GM12878 (cell line): ENCODE measurements at regions of chr16 and their contacts with region 1.

Region 1: DNA sequence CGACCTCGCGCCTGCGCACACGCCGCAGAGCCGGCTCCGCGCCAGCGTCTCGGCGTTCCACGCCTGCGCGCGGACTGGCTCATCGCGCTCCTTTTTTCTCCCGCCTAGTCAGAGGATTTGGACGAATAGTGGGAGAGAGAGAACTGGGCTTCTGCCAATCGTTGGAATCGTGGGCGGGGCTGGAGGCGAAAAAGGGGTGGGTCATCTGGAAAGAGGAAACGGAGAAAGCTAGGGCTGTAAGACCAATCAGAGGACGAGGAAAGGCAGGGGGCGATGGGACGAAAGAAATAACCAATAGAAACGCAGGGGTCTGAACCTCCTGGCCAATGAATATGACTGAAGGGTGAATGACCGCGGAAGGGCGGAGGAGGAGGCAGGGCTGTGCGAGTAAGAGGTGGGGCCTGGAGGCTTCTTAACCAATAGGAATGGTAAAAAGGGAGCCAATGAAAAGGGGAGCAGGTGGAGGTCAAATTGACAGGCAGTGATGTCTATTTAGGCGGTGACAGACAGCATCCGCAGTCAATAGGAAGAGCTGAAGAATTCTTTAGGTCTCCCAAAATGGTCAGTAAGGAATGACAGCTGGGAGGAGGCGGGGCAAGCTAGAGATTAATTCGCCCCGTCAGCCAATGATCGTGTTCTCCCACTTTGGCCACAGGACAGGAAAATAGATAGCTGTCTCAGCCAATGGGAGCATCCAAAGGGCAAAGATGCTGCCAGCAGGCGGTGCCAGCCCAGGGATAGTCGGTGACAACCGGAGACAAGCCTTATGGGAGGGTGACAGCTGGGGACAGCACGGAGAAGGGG is at the start of gene TBC1D10B:
- DNase-seq: peak; percentile 100
- ATAC-seq: peak; percentile 91
- H3K4me3 ChIP-seq: peak within 1 kb of the TSS; percentile 97
- H3K27ac ChIP-seq: peak within 1 kb of the TSS; percentile 77
- H3K4me1 ChIP-seq: peaks cover 16% of the 10 kb centered on the region
- H3K27me3 ChIP-seq: no peaks in the 10 kb centered on the region
- CTCF ChIP-seq: peak in 2 of 3 experiments; percentile 13 to 24; a peak in 3 of 6 replicates
- EP300 ChIP-seq: no peak
- POLR2A ChIP-seq: no peak; the same call in 1 of the 2 replicates
- RAD21 ChIP-seq: no peak
- polyA plus RNA-seq, gene TBC1D10B: 2.2 to 4.4 TPM

Region 2: DNA sequence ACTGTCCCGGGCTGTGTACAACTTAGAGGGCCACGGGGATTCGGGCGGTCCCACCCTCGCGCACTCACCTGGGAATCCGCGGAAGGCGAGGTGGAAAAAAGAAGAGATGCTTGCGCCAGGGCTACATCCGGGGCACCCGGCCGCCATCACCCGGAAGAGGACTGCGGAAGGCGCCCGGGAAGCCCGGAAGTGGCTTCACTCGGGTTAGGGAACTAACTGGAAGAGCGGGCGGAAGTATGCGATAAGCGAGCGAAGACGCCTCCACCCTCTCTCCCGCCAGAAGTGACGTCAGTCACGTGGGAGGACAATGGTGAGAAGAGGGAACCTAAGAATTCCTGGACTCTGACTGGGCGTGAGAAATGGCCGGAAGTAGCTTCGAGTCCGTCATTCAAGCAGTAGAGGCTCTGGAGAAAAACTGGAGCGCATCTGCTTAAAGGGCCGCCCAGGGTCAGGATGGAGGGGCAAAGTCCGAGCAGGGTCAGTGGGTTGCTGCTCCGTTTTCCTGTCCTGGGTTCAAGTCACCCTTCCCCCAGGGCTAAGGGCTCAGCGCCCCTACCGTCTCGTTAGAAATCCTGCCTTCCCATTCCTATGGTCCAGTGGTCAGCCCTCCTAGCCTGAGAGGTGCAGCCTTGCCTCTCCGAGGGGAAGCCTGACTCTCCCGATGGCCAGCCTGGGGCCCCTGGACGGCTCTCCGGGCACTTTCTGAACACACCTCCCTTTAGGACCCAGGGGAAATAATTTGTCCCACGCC is 15.3 kb before region 1 on chr16 and contains the start of gene CD2BP2:
- CTCF ChIA-PET with region 1: interaction called, 10 read pairs
- POLR2A ChIA-PET with region 1: interaction called, 21 read pairs
- RAD21 ChIA-PET with region 1: interaction called, 33 read pairs
- SMC1A ChIA-PET with region 1: interaction called, 5 read pairs
- in situ Hi-C with region 1: no loop called
- intact Hi-C with region 1: loop called (anchors 2 kb)
- DNase-seq: peak; percentile 93
- ATAC-seq: peak; percentile 81
- H3K4me3 ChIP-seq: peak within 1 kb of the TSS; percentile 94
- H3K27ac ChIP-seq: peak within 1 kb of the TSS; percentile 93
- H3K4me1 ChIP-seq: peaks cover 27% of the 10 kb centered on the region
- H3K27me3 ChIP-seq: no peaks in the 10 kb centered on the region
- CTCF ChIP-seq: no peak
- EP300 ChIP-seq: peak in 1 of 2 experiments; percentile 47; a peak in 1 of 4 replicates
- POLR2A ChIP-seq: peak; percentile 68
- RAD21 ChIP-seq: no peak
- polyA plus RNA-seq, gene CD2BP2: 3.3 to 5.5 TPM

Region 3: DNA sequence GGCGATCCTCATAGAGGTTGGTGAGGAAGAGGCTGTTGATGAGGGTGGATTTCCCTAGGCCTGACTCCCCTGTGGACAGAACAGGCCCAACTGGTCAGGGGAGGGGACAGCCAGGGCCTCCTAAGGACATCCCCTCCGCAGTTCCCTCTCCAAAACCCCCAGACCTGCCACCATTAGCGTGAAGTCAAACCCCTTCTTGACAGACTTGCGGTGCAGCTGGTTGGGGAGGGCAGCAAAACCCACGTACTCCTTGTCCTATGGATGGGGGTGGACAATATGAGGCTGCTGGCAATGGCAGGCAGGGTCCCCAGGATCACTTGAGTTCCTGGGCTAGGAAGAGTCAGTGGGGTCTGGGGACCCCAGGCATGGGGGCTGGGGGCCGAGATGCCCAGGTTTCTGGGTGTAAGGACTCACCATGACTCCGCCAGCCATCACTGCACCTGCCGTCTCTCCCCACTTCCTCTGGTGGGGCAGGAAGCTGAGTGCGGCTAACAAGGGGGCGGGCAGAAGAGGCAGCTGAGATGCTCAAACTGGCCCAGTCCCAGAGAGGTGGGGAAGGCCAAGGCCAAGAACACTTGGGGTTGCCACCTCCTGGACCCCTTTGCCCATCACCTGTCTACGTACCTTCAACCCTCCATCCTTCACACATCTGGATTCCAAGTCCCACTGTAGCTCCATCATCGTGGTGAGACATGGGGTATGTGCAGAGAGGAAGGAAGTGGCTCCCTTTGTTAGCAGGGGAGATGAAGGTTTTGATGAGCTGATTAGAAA is 11.7 kb after region 1 on chr16 and contains the start of gene SEPTIN1:
- CTCF ChIA-PET with region 1: interaction called, 9 read pairs
- POLR2A ChIA-PET with region 1: interaction called, 37 read pairs
- RAD21 ChIA-PET with region 1: interaction called, 18 read pairs
- SMC1A ChIA-PET with region 1: interaction called, 12 read pairs
- in situ Hi-C with region 1: no loop called
- intact Hi-C with region 1: no loop called
- DNase-seq: peak; percentile 40
- ATAC-seq: peak; percentile 61
- H3K4me3 ChIP-seq: peak within 1 kb of the TSS; percentile 97
- H3K27ac ChIP-seq: peak within 1 kb of the TSS; percentile 91
- H3K4me1 ChIP-seq: peaks cover 26% of the 10 kb centered on the region
- H3K27me3 ChIP-seq: no peaks in the 10 kb centered on the region
- CTCF ChIP-seq: no peak
- EP300 ChIP-seq: no peak
- POLR2A ChIP-seq: peak; percentile 92
- RAD21 ChIP-seq: no peak
- polyA plus RNA-seq, gene SEPTIN1: 2.8 to 16.0 TPM

Region 4: DNA sequence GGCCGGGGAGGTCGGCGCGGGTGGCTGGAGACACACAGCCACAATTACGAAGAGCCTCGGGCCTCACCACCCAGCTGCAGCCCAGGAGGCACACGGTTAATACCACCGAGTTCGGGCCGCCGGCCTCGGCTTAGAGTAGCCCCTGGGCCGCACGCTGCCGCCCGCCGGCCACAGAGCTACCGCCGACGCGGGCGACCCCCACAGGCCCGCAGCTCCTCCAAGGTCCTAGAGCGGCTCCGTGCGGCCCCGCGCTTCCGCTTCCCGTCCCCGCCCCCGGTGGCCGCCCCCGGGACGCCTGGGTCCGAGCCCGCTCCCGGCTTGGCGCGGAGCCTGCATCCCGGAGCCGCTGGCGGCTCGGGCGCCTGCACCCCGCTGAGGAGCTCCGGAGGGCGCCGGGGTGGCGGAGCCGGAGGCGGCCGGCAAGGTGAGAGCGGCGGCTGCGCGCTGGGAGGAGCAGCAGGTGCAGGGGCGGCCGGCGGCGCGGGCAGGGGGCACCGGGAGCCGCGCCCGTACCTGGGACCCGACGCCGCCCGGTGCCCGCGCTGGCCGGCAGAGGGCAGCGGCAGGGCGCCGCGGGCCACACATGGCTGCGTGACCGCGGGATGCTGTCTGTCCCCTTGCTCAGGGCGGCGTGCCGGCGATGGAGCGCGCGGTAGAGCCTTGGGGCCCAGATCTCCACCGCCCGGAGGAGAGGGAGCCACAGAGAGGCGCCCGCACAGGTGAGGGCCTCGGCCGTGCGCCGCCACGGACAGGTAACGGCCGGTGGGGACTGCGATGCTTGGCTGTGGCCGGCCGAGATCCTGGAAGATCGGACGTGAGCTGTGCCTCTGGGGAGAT is 24.7 kb after region 1 on chr16 and contains the start of gene ZNF48:
- CTCF ChIA-PET with region 1: interaction called, 11 read pairs
- POLR2A ChIA-PET with region 1: interaction called, 10 read pairs
- RAD21 ChIA-PET with region 1: interaction called, 9 read pairs
- SMC1A ChIA-PET with region 1: interaction called, 9 read pairs
- in situ Hi-C with region 1: no loop called
- intact Hi-C with region 1: no loop called
- DNase-seq: no peak
- ATAC-seq: peak; percentile 90
- H3K4me3 ChIP-seq: peak within 1 kb of the TSS; percentile 92
- H3K27ac ChIP-seq: peak within 1 kb of the TSS; percentile 42
- H3K4me1 ChIP-seq: peaks cover 13% of the 10 kb centered on the region
- H3K27me3 ChIP-seq: no peaks in the 10 kb centered on the region
- CTCF ChIP-seq: peak in 2 of 3 experiments; percentile 42 to 46; a peak in 3 of 6 replicates
- EP300 ChIP-seq: no peak
- POLR2A ChIP-seq: peak; percentile 74
- RAD21 ChIP-seq: no peak
- polyA plus RNA-seq, gene ZNF48: 0.14 to 1.0 TPM

Region 5: GRCh38 chr16:30401768-30402425 is 31.3 kb after region 1 on chr16:
- CTCF ChIA-PET with region 1: interaction called, 70 read pairs
- POLR2A ChIA-PET with region 1: interaction called, 12 read pairs
- RAD21 ChIA-PET with region 1: interaction called, 33 read pairs
- SMC1A ChIA-PET with region 1: interaction called, 15 read pairs
- in situ Hi-C with region 1: no loop called
- intact Hi-C with region 1: no loop called
- DNase-seq: no peak
- ATAC-seq: no peak
- H3K4me3 ChIP-seq: no peak overlapping the region
- H3K27ac ChIP-seq: no peak overlapping the region
- H3K4me1 ChIP-seq: peaks cover 8% of the 10 kb centered on the region
- H3K27me3 ChIP-seq: no peaks in the 10 kb centered on the region; a peak in 1 of 4 replicates
- CTCF ChIP-seq: no peak
- EP300 ChIP-seq: no peak
- POLR2A ChIP-seq: no peak
- RAD21 ChIP-seq: no peak

Region 6: GRCh38 chr16:30417529-30418349 is 47.1 kb after region 1 on chr16:
- CTCF ChIA-PET with region 1: interaction called, 70 read pairs
- POLR2A ChIA-PET with region 1: interaction called, 8 read pairs
- RAD21 ChIA-PET with region 1: interaction called, 10 read pairs
- SMC1A ChIA-PET with region 1: interaction called, 5 read pairs
- in situ Hi-C with region 1: no loop called
- intact Hi-C with region 1: no loop called
- DNase-seq: peak; percentile 84
- ATAC-seq: peak; percentile 97
- H3K4me3 ChIP-seq: peak overlapping the region; percentile 69
- H3K27ac ChIP-seq: peak overlapping the region; percentile 47
- H3K4me1 ChIP-seq: peaks cover 8% of the 10 kb centered on the region
- H3K27me3 ChIP-seq: no peaks in the 10 kb centered on the region
- CTCF ChIP-seq: peak in 2 of 3 experiments; percentile 29 to 33; a peak in 3 of 6 replicates
- EP300 ChIP-seq: peak in 1 of 2 experiments; percentile 33; a peak in 1 of 4 replicates
- POLR2A ChIP-seq: peak; percentile 84; the same call in 1 of the 2 replicates
- RAD21 ChIP-seq: no peak

Region 7: GRCh38 chr16:30615358-30616091 is 244.9 kb after region 1 on chr16:
- CTCF ChIA-PET with region 1: interaction called, 11 read pairs
- POLR2A ChIA-PET with region 1: no interaction called
- RAD21 ChIA-PET with region 1: interaction called, 3 read pairs
- SMC1A ChIA-PET with region 1: interaction called, 3 read pairs
- in situ Hi-C with region 1: no loop called
- intact Hi-C with region 1: no loop called
- DNase-seq: no peak
- ATAC-seq: peak; percentile 82
- H3K4me3 ChIP-seq: no peak overlapping the region
- H3K27ac ChIP-seq: no peak overlapping the region
- H3K4me1 ChIP-seq: no peaks in the 10 kb centered on the region
- H3K27me3 ChIP-seq: no peaks in the 10 kb centered on the region
- CTCF ChIP-seq: peak; percentile 72 to 75 (median 74)
- EP300 ChIP-seq: no peak
- POLR2A ChIP-seq: no peak
- RAD21 ChIP-seq: peak; percentile 72

Region 8: GRCh38 chr16:30775392-30776188 is 404.9 kb after region 1 on chr16:
- CTCF ChIA-PET with region 1: no interaction called
- POLR2A ChIA-PET with region 1: no interaction called
- RAD21 ChIA-PET with region 1: no interaction called
- SMC1A ChIA-PET with region 1: no interaction called
- in situ Hi-C with region 1: no loop called
- intact Hi-C with region 1: no loop called
- DNase-seq: no peak
- ATAC-seq: peak; percentile 91
- H3K4me3 ChIP-seq: peak overlapping the region; percentile 78
- H3K27ac ChIP-seq: peak overlapping the region; percentile 69
- H3K4me1 ChIP-seq: no peaks in the 10 kb centered on the region
- H3K27me3 ChIP-seq: no peaks in the 10 kb centered on the region
- CTCF ChIP-seq: no peak
- EP300 ChIP-seq: no peak
- POLR2A ChIP-seq: peak; percentile 86
- RAD21 ChIP-seq: no peak